Activated CD8-positive, alpha-beta memory T cell treated with anti-CD3 and anti-CD28 coated beads, Interleukin-2, amount 10 ng/mL, durations not matched to agents 7 days and 5 days (primary cell): ENCODE measurements at regions of chr2 and their contacts with region 1.

Region 1: GRCh38 chr2:169573160-169573973 is at the start of gene FASTKD1:
- DNase-seq: peak; percentile 94
- ATAC-seq: peak; percentile 97
- H3K4me3 Mint-ChIP-seq: peak within 1 kb of the TSS; percentile 92
- H3K27ac Mint-ChIP-seq: peak within 1 kb of the TSS; percentile 83
- H3K4me1 Mint-ChIP-seq: peaks cover 29% of the 10 kb centered on the region
- H3K27me3 Mint-ChIP-seq: no peaks in the 10 kb centered on the region
- total RNA-seq, gene FASTKD1: 45.2 to 48.9 TPM

Region 2: DNA sequence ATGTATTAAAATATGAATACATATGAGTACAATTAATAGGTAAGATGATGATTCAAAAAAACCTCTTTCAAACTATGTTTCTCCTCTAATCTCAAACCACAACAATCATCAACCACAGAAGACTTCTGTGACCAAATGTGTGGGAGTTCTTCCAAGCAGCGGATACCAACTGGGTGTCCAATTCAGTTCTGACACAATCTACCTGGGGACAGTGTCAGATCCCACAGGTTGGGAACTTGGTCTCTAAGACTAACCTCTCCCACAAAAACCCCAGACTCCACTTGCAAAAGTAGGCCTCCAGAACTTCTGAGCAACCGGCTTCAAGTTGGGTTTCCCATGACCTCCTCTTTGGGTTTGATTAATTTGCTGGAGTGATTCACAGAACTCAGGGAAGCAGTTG is 26.6 kb before region 1 on chr2:
- CTCF ChIA-PET with region 1: no interaction called
- DNase-seq: no peak
- ATAC-seq: no peak
- H3K4me3 Mint-ChIP-seq: no peak overlapping the region
- H3K27ac Mint-ChIP-seq: no peak overlapping the region
- H3K4me1 Mint-ChIP-seq: peaks cover 5% of the 10 kb centered on the region
- H3K27me3 Mint-ChIP-seq: no peaks in the 10 kb centered on the region

Region 3: GRCh38 chr2:169584005-169584877 is 10.9 kb after region 1 on chr2 and contains the start of gene PPIG:
- CTCF ChIA-PET with region 1: interaction called, 13 read pairs
- DNase-seq: peak; percentile 93
- ATAC-seq: peak; percentile 94
- H3K4me3 Mint-ChIP-seq: peak within 1 kb of the TSS; percentile 100
- H3K27ac Mint-ChIP-seq: peak within 1 kb of the TSS; percentile 100
- H3K4me1 Mint-ChIP-seq: peaks cover 32% of the 10 kb centered on the region
- H3K27me3 Mint-ChIP-seq: no peaks in the 10 kb centered on the region
- total RNA-seq, gene PPIG: 55.5 to 56.7 TPM